Activated CD4-positive, alpha-beta T cell treated with anti-CD3 and anti-CD28 coated beads, Interleukin-2, amount 10 ng/mL, durations not matched to agents 24 days and 14 days (primary cell): ENCODE measurements at regions of chr5 and their contacts with region 1.

Region 1: GRCh38 chr5:82364497-82364896 is 86.3 kb upstream of the RPS23 start:
- DNase-seq: no peak
- H3K4me3 Mint-ChIP-seq: no peak overlapping the region
- H3K27ac Mint-ChIP-seq: no peak overlapping the region
- H3K4me1 Mint-ChIP-seq: peaks cover 38% of the 10 kb centered on the region
- H3K27me3 Mint-ChIP-seq: no peaks in the 10 kb centered on the region

Region 2: DNA sequence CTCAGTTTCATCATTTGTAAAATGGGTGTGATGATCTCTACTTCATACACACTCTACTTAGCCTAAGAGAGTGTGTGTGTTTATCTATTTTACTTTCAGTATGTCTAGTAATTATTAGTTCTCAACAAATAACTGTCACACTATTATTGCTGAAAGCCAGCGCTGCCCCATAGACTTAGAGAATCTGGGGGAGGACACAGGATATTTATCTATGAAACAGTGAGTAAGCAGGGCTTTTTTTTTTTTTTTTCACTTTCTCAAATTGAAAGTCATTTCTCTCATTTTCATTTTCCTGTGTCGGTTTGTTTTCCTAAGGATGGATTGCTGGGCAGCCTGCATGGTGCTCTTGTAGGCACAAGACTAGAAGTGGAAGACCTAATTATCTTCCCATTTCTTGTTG is 162.0 kb after region 1 on chr5:
- intact Hi-C with region 1: loop called (anchors 5 kb)
- DNase-seq: no peak
- H3K4me3 Mint-ChIP-seq: no peak overlapping the region
- H3K27ac Mint-ChIP-seq: no peak overlapping the region
- H3K4me1 Mint-ChIP-seq: peaks cover 11% of the 10 kb centered on the region
- H3K27me3 Mint-ChIP-seq: no peaks in the 10 kb centered on the region

Region 3: GRCh38 chr5:82885627-82886389 is 521.3 kb after region 1 on chr5:
- intact Hi-C with region 1: loop called (anchors 10 kb)
- DNase-seq: no peak
- H3K4me3 Mint-ChIP-seq: no peak overlapping the region
- H3K27ac Mint-ChIP-seq: no peak overlapping the region
- H3K4me1 Mint-ChIP-seq: peaks cover 22% of the 10 kb centered on the region
- H3K27me3 Mint-ChIP-seq: no peaks in the 10 kb centered on the region